Mammary epithelial cell (primary cell): ENCODE measurements at regions of chr11 and their contacts with region 1.

Region 1: GRCh38 chr11:85694386-85694980 is 8.5 kb upstream of the CCDC89 start:
- DNase-seq: peak; percentile 16
- H3K4me3 ChIP-seq: no peak overlapping the region
- H3K27ac ChIP-seq: no peak overlapping the region
- H3K4me1 ChIP-seq: no peaks in the 10 kb centered on the region
- H3K27me3 ChIP-seq: no peaks in the 10 kb centered on the region
- CTCF ChIP-seq: peak; percentile 49 to 58

Region 2: GRCh38 chr11:85718126-85718943 is 23.9 kb after region 1 on chr11:
- CTCF ChIA-PET with region 1: interaction called, 13 read pairs
- dilution Hi-C with region 1: no loop called
- in situ Hi-C with region 1: no loop called
- intact Hi-C with region 1: no loop called
- DNase-seq: no peak
- H3K4me3 ChIP-seq: no peak overlapping the region
- H3K27ac ChIP-seq: no peak overlapping the region
- H3K4me1 ChIP-seq: peaks cover 20% of the 10 kb centered on the region
- H3K27me3 ChIP-seq: no peaks in the 10 kb centered on the region
- CTCF ChIP-seq: no peak

Region 3: GRCh38 chr11:85844426-85845129 is 150.1 kb after region 1 on chr11:
- CTCF ChIA-PET with region 1: no interaction called
- dilution Hi-C with region 1: no loop called
- in situ Hi-C with region 1: no loop called
- intact Hi-C with region 1: loop called (anchors 5 kb)
- DNase-seq: peak; percentile 95
- H3K4me3 ChIP-seq: no peak overlapping the region
- H3K27ac ChIP-seq: peak overlapping the region; percentile 52
- H3K4me1 ChIP-seq: peaks cover 21% of the 10 kb centered on the region
- H3K27me3 ChIP-seq: no peaks in the 10 kb centered on the region
- CTCF ChIP-seq: no peak

Region 4: GRCh38 chr11:85941380-85941973 is 247.0 kb after region 1 on chr11:
- CTCF ChIA-PET with region 1: no interaction called
- dilution Hi-C with region 1: no loop called
- in situ Hi-C with region 1: no loop called
- intact Hi-C with region 1: loop called (anchors 5 kb)
- DNase-seq: peak; percentile 46
- H3K4me3 ChIP-seq: no peak overlapping the region
- H3K27ac ChIP-seq: no peak overlapping the region
- H3K4me1 ChIP-seq: peaks cover 4% of the 10 kb centered on the region
- H3K27me3 ChIP-seq: no peaks in the 10 kb centered on the region
- CTCF ChIP-seq: peak; percentile 57 to 78

Region 5: DNA sequence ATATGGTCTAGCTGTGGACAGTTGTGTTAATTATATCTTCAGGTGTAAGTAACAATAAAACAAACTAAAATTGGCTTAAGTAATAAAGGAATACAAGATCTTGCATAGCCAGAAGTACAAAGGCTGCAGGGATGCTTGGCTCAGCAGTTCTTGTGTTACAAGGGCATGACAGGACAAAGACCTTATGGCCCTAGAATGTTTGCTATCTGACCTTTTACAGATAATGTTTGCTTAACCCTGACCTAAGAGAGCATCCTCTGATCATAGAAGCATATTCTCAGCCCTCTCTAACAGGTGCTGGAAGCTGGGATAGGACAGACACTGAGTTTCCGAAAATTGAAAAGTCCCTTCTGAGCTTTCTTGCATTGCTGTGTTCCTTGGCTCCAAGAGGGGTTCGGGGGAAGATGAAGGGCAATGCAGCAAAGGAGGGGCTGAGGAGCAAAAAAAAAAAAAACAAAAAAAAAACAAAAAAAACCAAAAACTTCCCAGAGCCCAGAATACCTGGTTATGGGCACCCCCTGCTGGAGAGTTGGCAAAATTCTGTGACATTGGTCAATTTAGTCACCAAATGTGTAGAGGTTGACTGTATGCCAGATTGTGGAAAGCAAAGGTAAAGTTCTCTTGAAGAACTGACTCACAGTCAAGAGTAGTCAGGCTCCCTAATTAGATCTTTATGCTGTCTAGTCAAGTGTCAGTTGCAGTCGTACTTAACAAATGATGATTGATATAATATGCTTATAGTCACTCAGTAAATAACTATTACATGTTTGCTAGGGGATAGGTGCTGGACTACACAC is 597.2 kb after region 1 on chr11:
- CTCF ChIA-PET with region 1: no interaction called
- dilution Hi-C with region 1: no loop called
- in situ Hi-C with region 1: no loop called
- intact Hi-C with region 1: loop called (anchors 10 kb)
- DNase-seq: peak; percentile 70
- H3K4me3 ChIP-seq: no peak overlapping the region
- H3K27ac ChIP-seq: no peak overlapping the region
- H3K4me1 ChIP-seq: no peaks in the 10 kb centered on the region
- H3K27me3 ChIP-seq: no peaks in the 10 kb centered on the region
- CTCF ChIP-seq: peak; percentile 71 to 79